Right ventricle myocardium inferior (tissue), 1 donor: ENCODE measurements at regions of chr2 and their contacts with region 1.

Region 1: DNA sequence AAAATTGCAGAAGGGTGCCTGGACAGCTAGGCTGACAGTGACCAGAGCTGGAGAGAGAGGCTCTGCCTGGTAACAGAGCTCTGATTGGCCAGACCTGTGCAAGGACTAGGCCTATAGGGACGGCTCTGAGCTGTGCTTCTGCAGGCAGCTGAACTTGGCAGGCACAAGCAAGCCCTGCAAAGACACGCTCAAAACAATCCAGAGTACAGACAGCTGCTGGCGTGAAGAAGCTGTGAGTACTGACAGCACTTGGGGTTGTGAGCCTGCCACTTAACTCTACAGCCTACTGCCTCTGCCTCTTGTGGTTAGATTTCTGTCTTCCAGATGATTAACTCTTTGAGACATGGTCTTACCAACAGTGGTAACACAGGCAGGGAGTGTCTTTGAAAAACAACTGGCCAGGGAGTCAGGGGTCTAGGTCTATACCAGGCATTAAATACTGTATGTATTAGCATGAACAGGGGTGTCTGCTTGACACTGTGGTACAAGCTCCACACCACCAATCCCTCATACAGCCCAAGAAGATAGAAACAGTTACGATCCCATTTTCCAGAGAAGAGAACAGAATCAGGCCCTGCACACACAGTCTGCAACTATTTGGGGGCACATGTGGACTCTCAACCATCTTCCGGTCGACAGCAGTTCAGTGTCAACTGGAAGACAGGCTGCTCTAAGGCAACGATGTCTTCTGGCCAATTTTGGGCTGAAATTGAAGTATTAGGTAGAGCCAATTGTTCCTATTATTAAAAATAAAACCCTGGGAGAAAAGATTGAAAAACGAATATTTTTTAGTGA is 568.4 kb downstream of the TNS1 start:
- DNase-seq: peak; percentile 88
- ATAC-seq: peak; percentile 98

Region 2: DNA sequence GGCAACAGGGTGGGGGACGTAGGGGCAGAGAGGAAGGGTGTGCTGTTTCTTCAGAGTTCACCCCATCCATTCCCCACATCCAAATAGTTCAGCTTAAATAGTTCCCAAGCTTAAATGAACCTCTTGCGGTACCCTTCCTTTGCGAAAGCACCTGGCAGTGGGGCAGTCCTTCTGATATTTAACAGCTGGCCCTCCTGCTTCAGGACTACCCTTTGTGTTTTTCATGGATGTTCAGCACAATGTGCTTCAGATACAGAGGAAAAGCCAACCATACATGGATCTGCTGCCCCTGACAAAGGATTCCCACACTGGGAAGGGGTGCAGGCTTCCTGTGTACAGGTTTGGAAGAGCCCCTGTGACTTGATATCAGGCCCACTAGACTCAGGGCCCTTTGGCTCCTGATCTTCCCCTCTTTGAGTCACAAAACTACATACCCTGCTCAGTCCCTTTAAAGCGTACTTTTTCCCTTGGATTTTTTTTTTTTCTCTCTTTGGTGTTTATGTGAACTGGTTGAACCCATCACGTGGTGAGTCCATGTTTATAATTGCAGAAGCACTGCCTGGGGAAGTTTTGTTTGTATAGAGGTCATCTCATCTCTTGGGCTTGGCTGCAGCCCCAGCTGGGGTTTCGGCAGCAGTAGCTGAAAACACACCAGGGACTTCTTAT is 693.7 kb before region 1 on chr2:
- intact Hi-C with region 1: no loop called
- DNase-seq: no peak
- ATAC-seq: peak; percentile 34

Region 3: GRCh38 chr2:217289877-217290279 is 144.5 kb before region 1 on chr2:
- intact Hi-C with region 1: loop called (anchors 5 kb)
- DNase-seq: no peak
- ATAC-seq: peak; percentile 83

Region 4: GRCh38 chr2:217331523-217332139 is 102.7 kb before region 1 on chr2:
- intact Hi-C with region 1: loop called (anchors 5 kb)
- DNase-seq: no peak
- ATAC-seq: peak; percentile 77

Region 5: GRCh38 chr2:217393585-217394032 is 40.8 kb before region 1 on chr2:
- intact Hi-C with region 1: loop called (anchors 5 kb)
- DNase-seq: no peak
- ATAC-seq: peak; percentile 95

Region 6: GRCh38 chr2:217467331-217467730 is 33.0 kb after region 1 on chr2:
- intact Hi-C with region 1: no loop called
- DNase-seq: no peak
- ATAC-seq: no peak